Naive thymus-derived CD4-positive, alpha-beta T cell (primary cell): ENCODE measurements at regions of chr13 and their contacts with region 1.

Region 1: GRCh38 chr13:99959538-99960230 is 11.9 kb downstream of the ZIC5 start:
- DNase-seq: peak in 4 of 9 donors; percentile 22 to 41 (median 32)
- ATAC-seq: no peak
- H3K4me3 ChIP-seq: no peak overlapping the region
- H3K4me3 Mint-ChIP-seq: peak overlapping the region; percentile 44 to 85 (median 72)
- H3K27ac ChIP-seq: no peak overlapping the region
- H3K27ac Mint-ChIP-seq: peak overlapping the region in 1 of 9 donors; percentile 49
- H3K4me1 ChIP-seq: peaks cover 17 to 31% of the 10 kb centered on the region in 2 donors
- H3K4me1 Mint-ChIP-seq: peaks cover 9 to 43% (median 34%) of the 10 kb centered on the region in 7 donors
- H3K27me3 ChIP-seq: peaks cover 32 to 58% of the 10 kb centered on the region in 2 donors
- H3K27me3 Mint-ChIP-seq: peaks cover 70 to 91% (median 86%) of the 10 kb centered on the region in 5 donors

Region 2: GRCh38 chr13:99895223-99895994 is 64.3 kb before region 1 on chr13:
- CTCF ChIA-PET with region 1: no interaction called
- POLR2A ChIA-PET with region 1: no interaction called
- intact Hi-C with region 1: loop called in 1 of 2 experiments (anchors 5 kb)
- DNase-seq: peak in 2 of 9 donors; percentile 10 to 27
- ATAC-seq: peak; percentile 14
- H3K4me3 ChIP-seq: peak overlapping the region; percentile 62
- H3K4me3 Mint-ChIP-seq: peak overlapping the region; percentile 39 to 96 (median 82)
- H3K27ac ChIP-seq: no peak overlapping the region
- H3K27ac Mint-ChIP-seq: peak overlapping the region in 1 of 9 donors; percentile 72
- H3K4me1 ChIP-seq: peaks cover 7% of the 10 kb centered on the region in 2 donors
- H3K4me1 Mint-ChIP-seq: peaks cover 7 to 24% (median 16%) of the 10 kb centered on the region in 7 donors
- H3K27me3 ChIP-seq: peaks cover 6 to 28% of the 10 kb centered on the region in 2 donors
- H3K27me3 Mint-ChIP-seq: peaks cover 50 to 68% (median 54%) of the 10 kb centered on the region in 5 donors

Region 3: DNA sequence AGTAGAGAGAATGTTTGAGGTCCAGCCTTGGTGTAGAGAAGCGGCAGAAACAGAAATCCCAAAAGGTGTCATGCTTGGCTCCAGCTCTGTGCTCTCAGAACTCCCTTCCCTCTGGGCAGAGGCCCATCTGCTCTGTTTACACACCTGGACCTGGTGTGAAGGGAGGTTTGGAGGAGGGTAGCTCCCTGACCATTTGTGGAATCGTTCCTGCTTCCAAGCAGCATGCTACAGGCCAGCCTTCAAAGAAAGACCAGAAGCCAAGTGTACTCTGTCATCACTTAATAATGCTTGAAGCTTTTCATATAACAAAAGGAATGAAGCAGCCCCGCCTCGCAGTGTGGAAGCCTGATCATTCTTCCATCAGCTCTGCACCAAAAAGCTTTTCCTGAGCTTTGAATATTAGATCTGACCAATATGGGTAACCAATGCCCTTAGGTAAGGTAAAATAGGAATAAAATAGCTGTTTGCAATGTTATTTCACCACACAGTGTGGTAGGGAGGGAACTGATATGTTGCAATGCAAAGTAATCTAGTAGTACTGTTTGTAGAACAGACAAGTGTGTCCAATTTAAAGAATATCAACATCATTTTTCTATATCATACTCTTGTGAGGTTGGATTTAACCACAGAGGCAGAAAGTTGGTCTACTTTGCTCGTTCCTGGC is 51.4 kb before region 1 on chr13:
- CTCF ChIA-PET with region 1: no interaction called
- POLR2A ChIA-PET with region 1: no interaction called
- intact Hi-C with region 1: no loop called
- DNase-seq: no peak
- ATAC-seq: no peak
- H3K4me3 ChIP-seq: no peak overlapping the region
- H3K4me3 Mint-ChIP-seq: no peak overlapping the region
- H3K27ac ChIP-seq: no peak overlapping the region
- H3K27ac Mint-ChIP-seq: no peak overlapping the region
- H3K4me1 ChIP-seq: peaks cover 0 to 12% of the 10 kb centered on the region in 2 donors
- H3K4me1 Mint-ChIP-seq: peaks cover 0 to 26% (median 5%) of the 10 kb centered on the region in 7 donors
- H3K27me3 ChIP-seq: no peaks in the 10 kb centered on the region
- H3K27me3 Mint-ChIP-seq: peaks cover 20 to 41% (median 32%) of the 10 kb centered on the region in 5 donors

Region 4: DNA sequence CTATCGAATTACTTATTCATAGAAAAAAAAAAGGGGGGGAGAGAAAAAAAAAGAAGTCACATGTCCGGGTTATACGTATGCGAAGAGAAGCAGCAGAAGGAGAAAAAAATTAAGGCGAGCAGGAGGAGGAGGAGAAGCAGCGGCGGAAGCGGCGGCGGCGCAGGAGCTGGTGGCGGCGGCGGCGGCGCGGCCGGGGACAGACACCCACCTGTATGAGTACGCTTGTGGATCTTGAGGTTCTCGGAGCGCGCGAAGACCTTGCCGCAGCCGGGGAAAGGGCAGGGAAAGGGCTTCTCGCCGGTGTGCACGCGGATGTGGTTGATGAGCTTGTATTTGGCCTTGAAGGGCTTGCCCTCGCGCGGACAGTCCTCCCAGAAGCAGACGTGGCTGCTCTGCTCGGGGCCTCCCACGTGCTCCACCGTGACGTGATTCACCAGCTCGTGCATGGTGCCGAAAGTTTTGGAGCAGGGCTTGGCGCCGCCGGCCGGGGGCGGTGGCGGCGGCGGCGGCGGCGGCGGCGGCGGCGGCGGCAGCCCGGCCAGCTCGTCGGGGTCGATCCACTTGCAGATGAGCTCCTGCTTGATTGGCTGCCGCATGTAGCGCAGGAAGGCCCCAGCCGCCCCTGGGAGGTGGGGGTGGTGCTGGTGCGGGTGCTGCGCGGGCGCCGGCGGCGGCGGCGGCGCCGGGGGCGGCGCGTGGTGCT is 10.4 kb after region 1 on chr13:
- CTCF ChIA-PET with region 1: no interaction called
- POLR2A ChIA-PET with region 1: interaction called, 4 read pairs
- intact Hi-C with region 1: loop called in 1 of 2 experiments (anchors 1 kb)
- DNase-seq: peak in 1 of 9 donors; percentile 49
- ATAC-seq: peak; percentile 48
- H3K4me3 ChIP-seq: no peak overlapping the region
- H3K4me3 Mint-ChIP-seq: peak overlapping the region; percentile 82 to 95 (median 86)
- H3K27ac ChIP-seq: no peak overlapping the region
- H3K27ac Mint-ChIP-seq: peak overlapping the region in 8 of 9 donors; percentile 53 to 91 (median 86)
- H3K4me1 ChIP-seq: peaks cover 0 to 10% of the 10 kb centered on the region in 2 donors
- H3K4me1 Mint-ChIP-seq: peaks cover 18 to 34% (median 25%) of the 10 kb centered on the region in 7 donors
- H3K27me3 ChIP-seq: peaks cover 47 to 74% of the 10 kb centered on the region in 2 donors
- H3K27me3 Mint-ChIP-seq: peaks cover 68 to 79% (median 70%) of the 10 kb centered on the region in 5 donors

Region 5: DNA sequence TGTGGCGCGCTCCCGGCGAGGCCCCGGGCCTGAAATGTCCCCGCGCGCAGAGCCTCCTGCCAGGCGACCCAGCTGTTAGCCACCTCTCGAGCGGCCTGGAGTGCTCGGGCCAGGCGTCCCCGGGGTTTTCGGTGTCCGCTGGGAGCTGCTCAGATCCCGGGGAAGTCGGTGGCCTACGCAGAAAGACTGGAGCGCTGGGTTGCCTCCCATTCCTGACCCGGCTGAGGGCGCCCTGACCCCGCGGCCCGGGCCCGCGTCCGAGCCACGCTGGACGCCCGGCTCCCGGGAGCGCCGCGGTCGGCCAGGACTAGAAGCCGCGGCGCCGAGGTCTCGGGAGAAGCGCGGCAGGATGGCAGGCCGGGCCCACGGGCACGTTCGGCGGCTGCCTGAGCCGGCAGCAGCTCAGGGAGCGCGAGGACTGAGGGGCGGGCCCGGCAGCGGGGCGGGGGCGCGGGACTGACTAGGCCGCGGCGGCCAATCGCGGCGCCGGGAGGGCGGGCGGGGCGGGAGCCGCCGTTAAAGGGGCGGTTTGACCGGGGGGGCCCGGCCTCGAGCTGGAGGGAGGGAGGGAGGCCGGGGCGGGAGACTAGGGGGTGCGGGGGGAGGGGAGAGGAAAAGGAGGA is 20.6 kb after region 1 on chr13:
- CTCF ChIA-PET with region 1: no interaction called
- POLR2A ChIA-PET with region 1: no interaction called
- intact Hi-C with region 1: loop called in 1 of 2 experiments (anchors 1 kb)
- DNase-seq: peak in 6 of 9 donors; percentile 44 to 64 (median 55)
- ATAC-seq: peak; percentile 78
- H3K4me3 ChIP-seq: no peak overlapping the region
- H3K4me3 Mint-ChIP-seq: peak overlapping the region in 4 of 10 donors; percentile 42 to 68 (median 59)
- H3K27ac ChIP-seq: no peak overlapping the region
- H3K27ac Mint-ChIP-seq: no peak overlapping the region
- H3K4me1 ChIP-seq: peaks cover 8 to 18% of the 10 kb centered on the region in 2 donors
- H3K4me1 Mint-ChIP-seq: peaks cover 0 to 35% (median 23%) of the 10 kb centered on the region in 7 donors
- H3K27me3 ChIP-seq: peaks cover 22 to 66% of the 10 kb centered on the region in 2 donors
- H3K27me3 Mint-ChIP-seq: peaks cover 51 to 71% (median 54%) of the 10 kb centered on the region in 5 donors

Region 6: DNA sequence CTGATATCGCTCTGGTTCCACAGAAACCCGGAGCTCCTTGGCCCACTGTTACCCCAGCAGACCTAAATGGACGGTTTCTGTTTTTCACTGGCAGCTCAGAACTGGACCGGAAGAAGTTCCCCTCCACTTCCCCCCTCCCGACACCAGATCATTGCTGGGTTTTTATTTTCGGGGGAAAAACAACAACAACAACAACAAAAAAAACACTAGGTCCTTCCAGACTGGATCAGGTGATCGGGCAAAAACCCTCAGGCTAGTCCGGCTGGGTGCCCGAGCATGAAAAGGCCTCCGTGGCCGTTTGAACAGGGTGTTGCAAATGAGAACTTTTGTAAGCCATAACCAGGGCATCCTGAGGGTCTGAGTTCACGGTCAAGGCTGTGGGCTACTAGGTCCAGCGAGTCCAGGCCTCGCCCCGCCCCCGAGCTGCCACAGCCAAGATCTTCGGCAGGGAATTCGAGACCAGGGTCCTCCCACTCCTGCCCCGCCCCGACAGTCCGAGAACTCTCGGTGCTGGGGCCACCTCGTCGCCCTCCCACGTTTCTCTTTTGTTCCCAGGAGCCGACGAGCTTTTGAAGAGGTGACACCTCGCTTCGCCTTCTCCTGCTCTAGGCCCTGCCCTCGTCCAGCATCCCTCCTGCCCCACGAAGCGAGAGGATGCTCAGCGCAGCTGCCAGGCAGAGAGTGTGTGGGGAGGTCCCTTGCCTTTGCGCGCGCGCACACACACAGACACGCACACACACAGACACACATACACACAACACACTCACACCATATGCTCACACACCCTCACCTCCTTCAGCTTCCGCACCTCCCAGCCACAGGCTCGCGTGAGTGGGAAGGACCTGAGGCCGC is 30.7 kb after region 1 on chr13:
- CTCF ChIA-PET with region 1: no interaction called
- POLR2A ChIA-PET with region 1: no interaction called
- intact Hi-C with region 1: loop called (anchors 2 to 5 kb)
- DNase-seq: peak in 1 of 9 donors; percentile 19
- ATAC-seq: no peak
- H3K4me3 ChIP-seq: no peak overlapping the region
- H3K4me3 Mint-ChIP-seq: peak overlapping the region in 9 of 10 donors; percentile 23 to 64 (median 49)
- H3K27ac ChIP-seq: no peak overlapping the region
- H3K27ac Mint-ChIP-seq: peak overlapping the region in 3 of 9 donors; percentile 25 to 46 (median 34)
- H3K4me1 ChIP-seq: peaks cover 6 to 25% of the 10 kb centered on the region in 2 donors
- H3K4me1 Mint-ChIP-seq: peaks cover 4 to 36% (median 25%) of the 10 kb centered on the region in 7 donors
- H3K27me3 ChIP-seq: peaks cover 45 to 96% of the 10 kb centered on the region in 2 donors
- H3K27me3 Mint-ChIP-seq: peaks cover 73 to 96% (median 94%) of the 10 kb centered on the region in 5 donors

Region 7: GRCh38 chr13:99995589-99996380 is 36.1 kb after region 1 on chr13:
- CTCF ChIA-PET with region 1: no interaction called
- POLR2A ChIA-PET with region 1: interaction called, 3 read pairs
- intact Hi-C with region 1: loop called in 1 of 2 experiments (anchors 5 kb)
- DNase-seq: peak in 1 of 9 donors; percentile 26
- ATAC-seq: no peak
- H3K4me3 ChIP-seq: no peak overlapping the region
- H3K4me3 Mint-ChIP-seq: peak overlapping the region in 4 of 10 donors; percentile 23 to 57 (median 32)
- H3K27ac ChIP-seq: no peak overlapping the region
- H3K27ac Mint-ChIP-seq: peak overlapping the region in 5 of 9 donors; percentile 22 to 81 (median 63)
- H3K4me1 ChIP-seq: peaks cover 0 to 4% of the 10 kb centered on the region in 2 donors
- H3K4me1 Mint-ChIP-seq: peaks cover 0 to 26% (median 11%) of the 10 kb centered on the region in 7 donors
- H3K27me3 ChIP-seq: peaks cover 39 to 68% of the 10 kb centered on the region in 2 donors
- H3K27me3 Mint-ChIP-seq: peaks cover 78 to 88% (median 83%) of the 10 kb centered on the region in 5 donors